BJ (cell line): ENCODE measurements at regions of chr15 and their contacts with region 1.

Region 1: GRCh38 chr15:100572362-100572983 is 29.5 kb downstream of the LINS1 start:
- DNase-seq: no peak
- H3K4me3 ChIP-seq: no peak overlapping the region
- H3K27me3 ChIP-seq: no peaks in the 10 kb centered on the region
- CTCF ChIP-seq: no peak

Region 2: DNA sequence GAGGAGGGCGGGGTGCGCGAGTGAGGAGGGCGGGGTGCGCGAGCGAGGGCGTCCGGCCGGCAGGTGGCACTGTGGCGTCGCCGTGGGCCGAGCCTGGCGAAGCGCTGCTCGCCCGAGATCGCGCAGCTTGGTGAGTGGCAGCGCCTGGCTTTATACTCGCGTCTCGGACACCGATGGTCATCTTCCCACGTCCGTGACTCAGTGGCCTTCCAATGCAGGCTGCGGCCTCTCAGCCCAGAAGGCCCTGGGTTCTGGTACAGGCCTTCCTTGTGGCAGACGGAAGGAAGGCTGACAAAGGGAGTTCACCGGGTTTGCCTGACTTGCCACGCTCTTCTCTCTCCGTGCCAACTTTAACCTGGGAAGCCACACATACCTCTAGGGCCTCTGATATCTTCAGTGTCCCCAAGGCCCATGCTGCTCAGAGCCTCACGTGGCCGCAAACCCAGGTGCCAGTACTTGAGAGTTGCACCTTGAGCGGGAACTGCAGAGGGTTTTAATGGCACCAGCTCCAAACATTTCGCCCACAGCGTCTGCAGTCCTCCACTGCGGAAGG is 644.0 kb before region 1 on chr15:
- CTCF ChIA-PET with region 1: interaction called, 13 read pairs
- POLR2A ChIA-PET with region 1: no interaction called
- DNase-seq: no peak
- H3K4me3 ChIP-seq: peak overlapping the region; percentile 37
- H3K27me3 ChIP-seq: no peaks in the 10 kb centered on the region; the same call in 1 of the 2 replicates
- CTCF ChIP-seq: peak; percentile 44; the same call in 1 of the 2 replicates

Region 3: DNA sequence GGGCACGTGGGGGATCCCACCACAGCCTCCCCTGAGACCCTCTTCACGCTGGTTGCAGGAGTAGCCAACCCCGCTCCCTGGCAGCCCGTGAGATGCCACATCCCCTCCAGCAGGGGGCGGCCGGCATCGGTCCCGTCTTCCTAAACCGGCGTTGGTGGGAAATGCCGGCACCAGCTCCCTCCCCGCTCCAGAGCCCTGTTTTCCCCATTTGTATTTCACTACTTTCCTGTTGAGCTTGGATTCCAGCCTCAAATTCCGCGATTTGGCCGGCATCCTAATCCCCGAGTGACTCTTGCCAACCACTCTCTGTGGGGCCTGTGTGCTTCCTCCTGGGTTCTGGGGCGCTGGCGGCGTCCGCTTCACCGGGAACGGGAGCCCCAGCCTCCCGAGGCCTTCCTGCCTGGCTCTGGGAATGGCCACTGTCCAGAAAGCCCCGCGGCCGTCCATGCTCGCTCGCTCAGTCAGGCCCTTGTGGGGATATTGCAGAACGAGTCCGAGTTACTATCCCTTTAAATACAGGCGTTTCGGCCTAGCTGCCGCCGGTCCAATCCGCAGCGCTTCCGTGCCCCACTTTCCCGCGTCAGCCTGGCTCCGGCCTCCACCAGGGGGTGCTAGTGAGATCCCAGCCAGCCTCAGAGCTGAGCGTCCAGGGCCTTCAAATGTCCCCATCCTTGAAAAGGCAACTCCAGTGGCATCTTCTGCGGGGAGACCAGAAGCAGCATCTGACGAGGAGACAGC is 222.6 kb before region 1 on chr15:
- CTCF ChIA-PET with region 1: interaction called, 21 read pairs
- POLR2A ChIA-PET with region 1: no interaction called
- DNase-seq: peak; percentile 19
- H3K4me3 ChIP-seq: peak overlapping the region; percentile 65
- H3K27me3 ChIP-seq: no peaks in the 10 kb centered on the region
- CTCF ChIP-seq: peak; percentile 95

Region 4: DNA sequence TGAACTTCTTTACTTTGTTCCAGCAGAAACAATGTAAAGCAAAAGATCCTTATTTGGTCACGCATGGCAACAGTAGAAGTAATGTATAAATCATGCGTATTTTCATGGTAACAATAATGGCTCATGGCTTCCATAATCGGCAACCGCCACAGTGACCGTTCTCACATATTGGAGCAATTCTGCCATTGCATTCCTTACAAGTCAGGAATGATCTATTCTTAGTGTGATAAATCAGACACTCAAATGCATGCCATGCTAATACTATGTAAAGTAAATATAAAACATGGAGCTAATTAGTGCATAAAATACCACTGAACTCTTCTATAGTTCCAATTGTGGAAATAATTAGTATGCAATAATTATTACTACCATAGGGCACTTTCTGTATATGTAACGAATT is 30.2 kb before region 1 on chr15:
- CTCF ChIA-PET with region 1: no interaction called
- POLR2A ChIA-PET with region 1: no interaction called
- DNase-seq: no peak
- H3K4me3 ChIP-seq: no peak overlapping the region
- H3K27me3 ChIP-seq: no peaks in the 10 kb centered on the region
- CTCF ChIP-seq: no peak